ENCODE measurements at regions of chr6 and their contacts with region 1.

Region 1: DNA sequence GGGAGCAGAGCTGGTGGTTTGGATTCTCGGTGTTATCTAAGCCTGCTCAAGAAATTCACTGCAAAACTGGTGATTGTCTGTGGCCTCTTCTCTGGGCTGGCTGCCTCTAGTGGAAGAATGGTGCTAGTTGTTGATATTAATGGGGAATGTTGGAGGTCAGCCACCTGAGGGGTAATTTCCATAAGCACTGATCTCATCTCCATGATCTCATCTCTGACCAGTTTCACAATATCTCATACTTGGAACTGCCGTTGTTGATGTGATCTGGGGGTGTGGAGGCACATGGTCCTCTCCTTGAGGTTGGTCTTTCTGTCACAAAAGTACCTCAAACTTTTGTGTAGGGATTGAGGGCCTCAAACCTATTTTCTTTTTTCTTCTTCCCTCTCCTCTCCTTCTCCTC is 102.6 kb downstream of the CD109 start:
- DNase-seq: peak in 1 of 2 donors; percentile 52
- ATAC-seq: peak in 6 of 8 donors; percentile 49 to 93 (median 77)
- H3K4me3 ChIP-seq: no peak overlapping the region
- H3K27ac ChIP-seq: no peak overlapping the region
- H3K4me1 ChIP-seq: peaks cover 0 to 6% (median 0%) of the 10 kb centered on the region in 9 donors
- H3K27me3 ChIP-seq: no peaks in the 10 kb centered on the region
- CTCF ChIP-seq: peak in 4 of 9 donors; percentile 9 to 19 (median 14)

Region 2: GRCh38 chr6:73747289-73747688 is 51.3 kb before region 1 on chr6:
- intact Hi-C with region 1: loop called in 1 of 10 experiments (anchors 10 kb)
- DNase-seq: no peak
- ATAC-seq: no peak
- H3K4me3 ChIP-seq: peak overlapping the region in 1 of 10 donors; percentile 6
- H3K27ac ChIP-seq: peak overlapping the region in 1 of 10 donors; percentile 65
- H3K4me1 ChIP-seq: peaks cover 0 to 11% (median 0%) of the 10 kb centered on the region in 9 donors
- H3K27me3 ChIP-seq: no peaks in the 10 kb centered on the region
- CTCF ChIP-seq: no peak

Region 3: DNA sequence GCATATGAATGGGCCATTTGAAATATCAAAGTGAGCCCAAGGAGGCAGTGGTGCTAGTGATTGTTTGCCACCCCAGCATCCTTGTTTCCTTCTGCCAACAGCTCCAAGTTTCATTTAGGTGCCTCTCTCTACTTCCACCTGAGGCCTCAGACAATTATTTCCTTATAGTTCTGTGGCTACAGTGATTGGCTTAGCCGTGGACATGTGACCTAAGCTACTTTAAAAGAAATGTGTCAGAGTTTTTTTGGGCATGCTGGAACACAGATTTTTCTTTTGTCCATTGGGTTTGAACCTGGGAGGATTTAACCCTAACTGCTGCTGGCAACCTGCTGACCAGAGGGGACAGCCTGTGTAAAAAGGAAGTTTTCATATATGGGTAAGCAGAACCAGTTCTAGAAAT is 216.8 kb after region 1 on chr6:
- intact Hi-C with region 1: no loop called
- DNase-seq: no peak
- ATAC-seq: no peak
- H3K4me3 ChIP-seq: no peak overlapping the region
- H3K27ac ChIP-seq: no peak overlapping the region
- H3K4me1 ChIP-seq: no peaks in the 10 kb centered on the region
- H3K27me3 ChIP-seq: no peaks in the 10 kb centered on the region
- CTCF ChIP-seq: no peak

Measured in heart right ventricle (tissue), 16 donors.